ENCODE measurements at regions of chr6 and their contacts with region 1.

Region 1: GRCh38 chr6:19771753-19772336 is 65.3 kb upstream of the ID4 start:
- DNase-seq: no peak
- H3K4me3 ChIP-seq: no peak overlapping the region
- H3K27ac ChIP-seq: no peak overlapping the region
- H3K27me3 ChIP-seq: no peaks in the 10 kb centered on the region
- CTCF ChIP-seq: no peak

Region 2: GRCh38 chr6:19632786-19633185 is 139.1 kb before region 1 on chr6:
- CTCF ChIA-PET with region 1: no interaction called
- POLR2A ChIA-PET with region 1: no interaction called
- DNase-seq: no peak
- H3K4me3 ChIP-seq: no peak overlapping the region
- H3K27ac ChIP-seq: no peak overlapping the region
- H3K27me3 ChIP-seq: no peaks in the 10 kb centered on the region
- CTCF ChIP-seq: no peak

Region 3: GRCh38 chr6:19798362-19798761 is 26.5 kb after region 1 on chr6:
- CTCF ChIA-PET with region 1: no interaction called
- POLR2A ChIA-PET with region 1: interaction called, 13 read pairs
- DNase-seq: no peak
- H3K4me3 ChIP-seq: no peak overlapping the region
- H3K27ac ChIP-seq: no peak overlapping the region
- H3K27me3 ChIP-seq: no peaks in the 10 kb centered on the region
- CTCF ChIP-seq: no peak